KBM-7 (cell line): ENCODE measurements at regions of chr17 and their contacts with region 1.

Region 1: GRCh38 chr17:29568331-29569244 is at the start of gene TP53I13:
- DNase-seq: peak; percentile 79

Region 2: GRCh38 chr17:29148790-29149430 is 419.7 kb before region 1 on chr17:
- in situ Hi-C with region 1: loop called (anchors 25 kb)
- DNase-seq: peak; percentile 92

Region 3: GRCh38 chr17:30203471-30203981 is 634.9 kb after region 1 on chr17:
- in situ Hi-C with region 1: no loop called
- DNase-seq: no peak

Region 4: GRCh38 chr17:30263552-30264333 is 695.2 kb after region 1 on chr17:
- in situ Hi-C with region 1: no loop called
- DNase-seq: no peak